ENCODE measurements at regions of chr22 and their contacts with region 1.

Region 1: GRCh38 chr22:17158568-17159503 is at the start of gene HDHD5:
- DNase-seq: peak; percentile 96
- H3K4me3 Mint-ChIP-seq: peak within 1 kb of the TSS; percentile 89
- H3K27ac Mint-ChIP-seq: peak within 1 kb of the TSS; percentile 89
- H3K4me1 Mint-ChIP-seq: peaks cover 24% of the 10 kb centered on the region
- H3K27me3 Mint-ChIP-seq: peaks cover 2% of the 10 kb centered on the region
- total RNA-seq, gene HDHD5: 47.4 and 49.5 TPM in 2 replicates

Region 2: GRCh38 chr22:17007257-17007656 is 151.6 kb before region 1 on chr22:
- intact Hi-C with region 1: no loop called
- DNase-seq: no peak
- H3K4me3 Mint-ChIP-seq: no peak overlapping the region
- H3K27ac Mint-ChIP-seq: no peak overlapping the region
- H3K4me1 Mint-ChIP-seq: no peaks in the 10 kb centered on the region
- H3K27me3 Mint-ChIP-seq: peaks cover 24% of the 10 kb centered on the region

Region 3: DNA sequence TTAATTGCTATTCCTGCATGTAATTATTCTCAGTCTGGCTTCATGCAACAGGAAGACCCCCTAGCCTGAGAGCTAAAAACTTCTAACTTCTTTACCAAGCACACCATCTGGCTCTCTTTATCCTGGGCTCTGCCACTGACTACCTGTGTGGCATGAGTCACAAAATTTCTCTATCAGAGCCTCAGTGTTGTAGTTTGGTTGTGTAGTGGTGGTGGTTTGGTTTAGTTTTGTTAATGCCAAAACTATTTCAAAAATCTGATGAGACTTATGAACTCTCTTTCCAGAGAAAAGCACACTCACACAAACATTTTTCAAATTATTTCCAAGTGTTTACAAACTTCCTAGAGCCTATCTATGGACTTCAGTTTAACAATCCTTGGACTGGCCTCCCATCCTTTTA is 81.6 kb before region 1 on chr22:
- intact Hi-C with region 1: loop called (anchors 1 kb)
- DNase-seq: no peak
- H3K4me3 Mint-ChIP-seq: no peak overlapping the region
- H3K27ac Mint-ChIP-seq: no peak overlapping the region
- H3K4me1 Mint-ChIP-seq: peaks cover 18% of the 10 kb centered on the region
- H3K27me3 Mint-ChIP-seq: peaks cover 29% of the 10 kb centered on the region

Region 4: GRCh38 chr22:17121227-17122195 is 37.3 kb before region 1 on chr22 and contains the start of gene TMEM121B:
- intact Hi-C with region 1: loop called (anchors 2 kb)
- DNase-seq: peak; percentile 73
- H3K4me3 Mint-ChIP-seq: peak within 1 kb of the TSS; percentile 79
- H3K27ac Mint-ChIP-seq: no peak within 1 kb of the TSS
- H3K4me1 Mint-ChIP-seq: peaks cover 32% of the 10 kb centered on the region
- H3K27me3 Mint-ChIP-seq: peaks cover 27% of the 10 kb centered on the region
- total RNA-seq, gene TMEM121B: 0.16 and 0.17 TPM in 2 replicates

Region 5: DNA sequence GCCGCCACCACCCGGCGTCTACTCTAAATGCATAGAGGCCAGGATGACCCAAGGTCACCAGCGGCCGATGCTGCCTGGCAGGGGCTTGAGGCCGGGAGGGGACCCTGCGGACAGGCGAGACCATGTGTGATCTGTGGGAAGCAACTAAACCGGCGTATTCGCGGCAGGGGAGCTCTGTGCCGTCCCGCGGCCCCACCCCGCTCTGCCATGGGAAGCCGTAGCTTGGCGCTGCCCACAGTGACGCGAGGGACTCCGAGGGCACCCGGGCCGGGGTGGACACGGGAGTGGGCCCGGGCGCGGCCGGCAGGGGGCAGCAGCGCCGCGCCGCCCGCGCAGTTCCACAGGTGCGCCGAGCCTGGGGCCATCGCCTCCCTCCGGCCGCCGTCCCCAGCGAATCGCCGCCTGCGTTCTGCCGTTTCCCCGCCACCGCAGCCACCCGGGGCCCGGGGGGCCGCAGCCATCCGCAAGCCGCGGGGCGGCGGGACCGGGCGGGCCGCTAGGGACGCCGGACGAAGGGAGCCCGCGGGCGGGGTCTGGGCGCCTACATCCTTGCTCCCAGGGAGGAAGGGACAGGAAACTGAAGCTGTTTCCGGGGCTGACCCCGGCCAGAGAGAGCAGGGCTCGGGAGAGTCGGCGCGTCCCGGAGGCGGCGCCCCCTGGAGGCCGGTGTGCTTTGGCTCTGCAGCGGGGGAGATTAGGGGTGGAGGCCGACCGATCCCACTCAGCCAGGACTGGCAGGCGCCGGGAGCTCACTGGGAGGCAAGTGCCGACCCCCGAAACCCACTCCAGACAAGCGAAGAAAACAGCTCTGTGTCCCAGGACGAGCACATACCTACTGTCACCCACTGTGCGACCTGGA is 12.7 kb after region 1 on chr22:
- intact Hi-C with region 1: loop called (anchors 1 kb)
- DNase-seq: peak; percentile 94
- H3K4me3 Mint-ChIP-seq: peak overlapping the region; percentile 87
- H3K27ac Mint-ChIP-seq: peak overlapping the region; percentile 46
- H3K4me1 Mint-ChIP-seq: peaks cover 6% of the 10 kb centered on the region
- H3K27me3 Mint-ChIP-seq: peaks cover 8% of the 10 kb centered on the region

Region 6: GRCh38 chr22:17597217-17597616 is 438.4 kb after region 1 on chr22:
- intact Hi-C with region 1: no loop called
- DNase-seq: no peak
- H3K4me3 Mint-ChIP-seq: no peak overlapping the region
- H3K27ac Mint-ChIP-seq: no peak overlapping the region
- H3K4me1 Mint-ChIP-seq: no peaks in the 10 kb centered on the region
- H3K27me3 Mint-ChIP-seq: no peaks in the 10 kb centered on the region

Region 7: GRCh38 chr22:17628304-17629166 is 469.7 kb after region 1 on chr22 and contains the start of gene ATP6V1E1:
- intact Hi-C with region 1: loop called (anchors 2 kb)
- DNase-seq: peak; percentile 99
- H3K4me3 Mint-ChIP-seq: peak within 1 kb of the TSS; percentile 93
- H3K27ac Mint-ChIP-seq: peak within 1 kb of the TSS; percentile 89
- H3K4me1 Mint-ChIP-seq: peaks cover 16% of the 10 kb centered on the region
- H3K27me3 Mint-ChIP-seq: no peaks in the 10 kb centered on the region
- total RNA-seq, gene ATP6V1E1: 109 and 114 TPM in 2 replicates